ENCODE measurements at regions of chr5 and their contacts with region 1.

Region 1: GRCh38 chr5:102450313-102450990 is 48.3 kb downstream of the SLCO6A1 start:
- DNase-seq: peak; percentile 15
- H3K4me3 ChIP-seq: no peak overlapping the region
- H3K27ac ChIP-seq: no peak overlapping the region
- H3K4me1 ChIP-seq: no peaks in the 10 kb centered on the region
- H3K27me3 ChIP-seq: no peaks in the 10 kb centered on the region
- CTCF ChIP-seq: peak; percentile 19 to 55

Region 2: DNA sequence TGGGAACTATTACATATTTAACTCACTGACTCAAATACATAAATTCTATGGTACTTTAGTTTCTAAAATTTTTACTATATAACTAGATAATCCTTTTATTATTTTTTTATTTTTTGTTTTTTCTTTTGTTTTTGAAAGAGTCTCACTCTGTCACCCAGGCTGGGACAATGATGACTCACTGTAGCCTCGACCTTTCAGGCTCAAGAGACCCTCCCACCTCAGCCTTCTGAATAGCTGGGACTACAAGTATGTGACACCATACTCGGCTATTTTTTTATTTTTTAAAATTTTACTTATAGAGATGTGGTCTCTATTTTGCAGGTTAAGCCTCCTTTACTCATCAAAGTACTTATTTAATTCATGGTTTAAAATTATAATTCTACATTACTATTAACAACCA is 62.2 kb before region 1 on chr5:
- CTCF ChIA-PET with region 1: no interaction called
- dilution Hi-C with region 1: no loop called
- in situ Hi-C with region 1: no loop called
- intact Hi-C with region 1: no loop called
- DNase-seq: no peak
- H3K4me3 ChIP-seq: no peak overlapping the region
- H3K27ac ChIP-seq: no peak overlapping the region
- H3K4me1 ChIP-seq: no peaks in the 10 kb centered on the region
- H3K27me3 ChIP-seq: no peaks in the 10 kb centered on the region
- CTCF ChIP-seq: no peak

Region 3: GRCh38 chr5:102481054-102481715 is 30.7 kb after region 1 on chr5:
- CTCF ChIA-PET with region 1: no interaction called
- dilution Hi-C with region 1: no loop called
- in situ Hi-C with region 1: no loop called
- intact Hi-C with region 1: no loop called
- DNase-seq: no peak
- H3K4me3 ChIP-seq: no peak overlapping the region
- H3K27ac ChIP-seq: no peak overlapping the region
- H3K4me1 ChIP-seq: no peaks in the 10 kb centered on the region
- H3K27me3 ChIP-seq: no peaks in the 10 kb centered on the region
- CTCF ChIP-seq: no peak

Region 4: GRCh38 chr5:102511666-102512065 is 61.2 kb after region 1 on chr5:
- CTCF ChIA-PET with region 1: no interaction called
- dilution Hi-C with region 1: no loop called
- in situ Hi-C with region 1: no loop called
- intact Hi-C with region 1: loop called (anchors 1 kb)
- DNase-seq: no peak
- H3K4me3 ChIP-seq: no peak overlapping the region
- H3K27ac ChIP-seq: no peak overlapping the region
- H3K4me1 ChIP-seq: no peaks in the 10 kb centered on the region
- H3K27me3 ChIP-seq: peaks cover 2% of the 10 kb centered on the region
- CTCF ChIP-seq: no peak

Measured in mammary epithelial cell (primary cell).